Endothelial cell of umbilical vein (primary cell): ENCODE measurements at regions of chr19 and their contacts with region 1.

Region 1: DNA sequence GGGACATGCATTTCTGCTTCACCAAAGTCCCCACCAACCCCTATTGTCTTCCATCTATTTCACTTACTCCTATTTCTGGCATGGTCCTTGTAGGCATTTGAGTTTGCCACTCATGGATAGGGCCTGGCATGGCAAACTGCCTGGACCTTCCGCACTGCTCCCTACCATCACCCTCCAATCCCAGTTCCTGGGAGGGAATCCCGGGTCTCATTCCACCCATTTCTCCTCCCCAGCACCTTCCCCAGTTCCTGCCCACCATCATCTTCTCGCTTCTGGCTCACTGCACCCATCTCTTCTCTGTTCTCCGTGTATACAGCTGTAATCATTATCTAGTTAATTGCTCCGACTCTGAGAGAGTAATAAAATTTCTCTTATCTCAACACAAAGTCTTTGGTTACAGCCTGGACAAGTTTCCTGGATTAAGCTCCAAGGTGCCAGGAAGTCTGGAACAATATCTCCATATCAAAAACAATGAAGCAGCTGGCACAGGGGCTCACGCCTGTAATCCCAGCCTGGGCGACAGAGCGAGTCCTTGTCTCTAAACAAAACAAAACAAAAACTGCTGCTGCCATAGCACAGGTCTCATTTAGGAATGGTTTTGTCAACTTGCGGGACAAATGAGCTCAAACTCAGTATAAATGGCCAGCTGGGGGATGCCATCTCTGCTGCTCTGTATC is 17.0 kb upstream of the COX7A1 start:
- DNase-seq: peak; percentile 93
- H3K4me3 ChIP-seq: no peak overlapping the region
- H3K27ac ChIP-seq: peak overlapping the region; percentile 86
- H3K4me1 ChIP-seq: peaks cover 10% of the 10 kb centered on the region
- H3K27me3 ChIP-seq: no peaks in the 10 kb centered on the region
- CTCF ChIP-seq: no peak
- POLR2A ChIP-seq: no peak

Region 2: DNA sequence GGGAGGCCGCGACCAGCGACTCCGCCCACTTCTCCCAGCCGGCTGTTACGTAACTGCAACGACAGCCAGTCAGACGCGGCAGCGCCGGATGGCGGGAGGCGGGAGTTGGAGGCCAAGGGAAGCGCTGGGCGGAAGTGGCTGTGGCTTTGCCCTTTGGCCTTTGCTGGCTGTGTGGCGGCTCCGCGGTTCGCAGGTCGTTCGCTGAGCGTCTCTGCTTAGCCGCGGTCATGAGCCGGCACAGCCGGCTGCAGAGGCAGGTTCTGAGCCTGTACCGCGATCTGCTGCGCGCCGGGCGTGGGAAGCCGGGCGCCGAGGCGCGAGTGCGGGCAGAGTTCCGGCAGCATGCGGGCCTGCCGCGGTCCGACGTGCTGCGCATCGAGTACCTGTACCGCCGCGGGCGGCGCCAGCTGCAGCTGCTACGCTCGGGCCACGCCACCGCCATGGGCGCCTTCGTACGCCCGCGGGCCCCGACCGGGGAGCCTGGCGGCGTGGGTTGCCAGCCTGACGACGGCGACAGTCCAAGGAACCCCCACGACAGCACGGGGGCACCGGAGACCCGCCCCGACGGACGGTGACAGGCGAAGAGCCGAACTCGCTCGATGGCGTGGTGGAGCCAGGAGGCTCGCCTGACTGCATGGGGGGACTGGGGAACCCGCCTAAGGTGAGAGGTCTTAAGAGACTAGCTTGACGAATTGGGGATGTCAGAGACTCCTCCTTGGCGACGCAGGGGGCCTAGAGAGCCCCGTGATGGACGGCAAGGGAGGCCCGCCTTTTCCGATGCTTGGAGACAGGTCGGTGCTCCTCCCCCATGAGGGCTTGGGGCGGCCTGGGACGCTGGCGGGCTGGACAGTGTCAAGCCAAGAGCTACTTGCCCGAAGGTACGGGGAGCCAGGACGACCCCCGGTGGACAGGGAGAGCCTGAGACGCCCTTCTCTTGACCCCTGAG is 173.9 kb before region 1 on chr19 and contains the start of gene SDHAF1:
- CTCF ChIA-PET with region 1: no interaction called
- POLR2A ChIA-PET with region 1: no interaction called
- dilution Hi-C with region 1: no loop called
- intact Hi-C with region 1: loop called (anchors 2 kb)
- DNase-seq: peak; percentile 92
- H3K4me3 ChIP-seq: peak within 1 kb of the TSS; percentile 62 to 75 (median 64)
- H3K27ac ChIP-seq: peak within 1 kb of the TSS; percentile 47
- H3K4me1 ChIP-seq: peaks cover 10% of the 10 kb centered on the region
- H3K27me3 ChIP-seq: no peaks in the 10 kb centered on the region
- CTCF ChIP-seq: no peak
- POLR2A ChIP-seq: peak; percentile 90
- total RNA-seq, gene SDHAF1: 8.4 and 10.3 TPM in 2 replicates

Region 3: DNA sequence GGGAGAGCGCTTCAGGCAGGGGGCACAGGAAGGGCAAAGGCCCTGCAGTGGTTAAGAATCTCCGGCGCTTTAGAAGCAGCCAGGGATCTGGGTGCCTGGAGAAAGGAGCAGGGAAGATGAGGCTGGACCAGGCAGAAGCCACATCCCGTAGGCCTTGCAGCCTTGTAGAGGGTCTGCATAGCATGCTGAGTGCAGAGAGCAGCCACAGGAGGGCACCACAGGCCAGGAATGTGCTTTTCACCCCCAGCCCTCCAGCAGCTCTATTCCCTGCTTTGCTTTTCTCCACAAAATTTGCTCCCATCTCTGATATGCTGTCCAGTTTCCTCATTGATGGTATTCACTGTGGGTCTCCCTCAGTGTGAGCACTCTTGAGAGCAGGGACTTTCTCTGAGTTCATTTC is 108.8 kb before region 1 on chr19:
- CTCF ChIA-PET with region 1: interaction called, 61 read pairs
- POLR2A ChIA-PET with region 1: no interaction called
- dilution Hi-C with region 1: no loop called
- intact Hi-C with region 1: loop called (anchors 1 kb)
- DNase-seq: peak; percentile 69
- H3K4me3 ChIP-seq: no peak overlapping the region
- H3K27ac ChIP-seq: no peak overlapping the region
- H3K4me1 ChIP-seq: peaks cover 8% of the 10 kb centered on the region
- H3K27me3 ChIP-seq: no peaks in the 10 kb centered on the region
- CTCF ChIP-seq: peak; percentile 72 to 89
- POLR2A ChIP-seq: no peak

Region 4: DNA sequence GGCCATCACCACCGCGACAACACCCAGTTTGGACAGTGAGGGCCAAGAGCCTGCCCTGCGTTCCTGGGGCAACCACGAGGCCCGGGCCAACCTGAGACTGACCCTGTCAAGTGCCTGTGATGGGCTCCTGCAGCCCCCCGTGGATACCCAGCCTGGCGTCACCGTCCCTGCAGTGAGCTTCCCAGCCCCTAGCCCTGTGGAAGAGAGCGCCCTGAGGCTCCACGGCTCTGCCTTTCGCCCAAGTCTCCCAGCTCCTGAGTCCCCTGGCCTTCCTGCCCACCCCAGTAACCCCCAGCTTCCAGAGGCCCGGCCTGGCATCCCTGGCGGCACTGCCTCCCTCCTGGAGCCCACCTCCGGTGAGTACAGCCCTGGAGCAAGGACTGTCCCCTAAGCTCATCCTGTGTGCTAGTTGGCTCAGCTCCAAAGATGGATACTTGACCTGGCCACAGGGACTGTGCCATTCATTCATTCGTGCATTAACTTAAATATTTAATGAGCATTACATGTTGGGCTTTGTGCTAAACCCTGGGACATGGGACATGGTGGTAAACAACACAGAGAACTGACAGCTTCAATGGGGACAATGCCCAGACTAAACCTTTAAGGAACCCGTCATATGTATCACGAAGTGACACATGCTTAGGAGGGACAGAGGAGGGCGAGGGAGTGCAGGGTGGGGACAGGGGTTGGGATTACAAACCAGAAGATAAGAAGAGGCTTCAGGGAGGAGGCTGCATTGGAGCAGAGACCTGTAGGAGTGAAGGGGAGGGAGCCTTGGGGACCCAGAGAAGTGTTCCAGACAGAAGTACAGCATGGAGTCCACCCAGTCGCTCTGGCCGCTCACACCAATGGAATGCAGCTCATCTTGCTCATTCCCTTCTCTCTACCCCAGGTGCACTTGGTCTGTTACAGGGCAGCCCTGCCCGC is 65.3 kb before region 1 on chr19:
- CTCF ChIA-PET with region 1: no interaction called
- POLR2A ChIA-PET with region 1: no interaction called
- dilution Hi-C with region 1: no loop called
- intact Hi-C with region 1: no loop called
- DNase-seq: no peak
- H3K4me3 ChIP-seq: no peak overlapping the region
- H3K27ac ChIP-seq: no peak overlapping the region
- H3K4me1 ChIP-seq: no peaks in the 10 kb centered on the region
- H3K27me3 ChIP-seq: no peaks in the 10 kb centered on the region
- CTCF ChIP-seq: no peak
- POLR2A ChIP-seq: no peak

Region 5: DNA sequence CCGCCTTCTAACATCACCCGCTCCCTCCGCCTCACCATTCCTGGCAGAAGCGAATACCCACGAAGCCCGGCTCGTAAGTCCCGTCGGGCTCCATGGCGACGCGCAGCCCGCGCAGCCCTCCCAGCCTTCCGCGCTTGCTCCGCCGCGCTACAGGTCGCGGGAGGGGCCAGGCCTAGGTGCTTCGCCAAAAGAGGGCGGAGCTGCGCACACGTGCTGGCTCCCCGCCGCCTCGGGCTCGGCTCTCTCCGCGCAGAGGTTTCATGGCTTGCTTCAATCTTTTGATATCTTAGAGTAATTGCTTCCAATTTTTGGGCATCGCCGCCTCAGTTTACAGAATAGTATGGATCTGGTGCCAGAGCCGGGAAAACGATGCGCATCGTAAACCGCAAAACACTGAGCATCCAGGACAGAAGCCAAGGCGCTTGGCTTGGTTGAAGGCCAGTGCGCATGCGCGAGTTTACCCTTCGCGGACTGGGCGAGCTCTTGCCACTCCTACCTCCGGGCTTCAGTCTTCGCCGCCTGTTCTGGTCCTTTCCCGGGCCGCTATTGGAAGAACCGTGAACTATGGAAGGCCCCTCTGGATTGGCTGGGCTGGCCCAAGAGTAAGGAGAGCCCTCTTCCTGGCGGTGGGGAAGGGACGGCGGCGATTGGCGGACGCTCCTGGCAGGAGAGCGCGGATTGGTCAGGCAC is 54.3 kb before region 1 on chr19 and contains the start of gene POLR2I:
- CTCF ChIA-PET with region 1: interaction called, 5 read pairs
- POLR2A ChIA-PET with region 1: interaction called, 5 read pairs
- dilution Hi-C with region 1: no loop called
- intact Hi-C with region 1: loop called (anchors 1 kb)
- DNase-seq: peak; percentile 100
- H3K4me3 ChIP-seq: peak within 1 kb of the TSS; percentile 68 to 81 (median 79)
- H3K27ac ChIP-seq: peak within 1 kb of the TSS; percentile 68
- H3K4me1 ChIP-seq: peaks cover 15% of the 10 kb centered on the region
- H3K27me3 ChIP-seq: no peaks in the 10 kb centered on the region
- CTCF ChIP-seq: no peak
- POLR2A ChIP-seq: peak; percentile 59
- total RNA-seq, gene POLR2I: 63.3 and 64.8 TPM in 2 replicates

Region 6: DNA sequence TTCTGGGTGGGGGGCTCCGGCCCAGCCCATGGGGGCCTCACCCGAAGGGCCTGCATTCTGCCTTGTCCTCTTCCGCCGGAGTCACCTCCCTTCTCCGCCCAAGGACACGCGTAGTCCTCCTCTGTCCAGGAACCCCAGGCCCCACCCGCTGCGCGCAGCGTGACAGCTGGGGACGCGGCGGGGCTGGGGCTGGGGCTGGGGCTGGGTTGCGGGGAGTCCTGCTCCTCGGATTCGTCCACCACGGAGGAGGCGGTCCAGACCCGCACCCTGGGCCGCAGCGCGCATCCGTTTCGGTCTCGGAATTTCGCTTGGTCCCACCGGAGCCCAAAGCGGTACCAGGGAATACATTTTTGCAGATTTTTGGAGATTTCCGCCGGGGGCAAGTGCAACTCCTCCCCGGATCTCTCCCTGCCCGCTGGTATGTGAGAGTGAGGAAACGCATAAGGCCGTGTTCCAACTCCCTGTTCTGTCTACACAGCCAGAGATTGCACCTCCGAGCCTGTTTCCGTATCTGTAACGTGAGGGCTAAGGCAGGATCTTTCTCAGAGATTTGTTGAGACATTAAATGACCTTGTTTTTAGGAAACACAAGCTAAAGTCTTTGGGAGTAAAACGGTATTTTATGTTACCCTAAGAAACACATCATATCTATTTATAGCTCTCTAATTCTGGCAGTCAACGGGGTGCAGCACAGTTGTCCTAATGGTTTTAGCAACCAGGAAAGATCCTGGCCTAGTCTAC is 16.7 kb before region 1 on chr19 and contains the start of gene COX7A1:
- CTCF ChIA-PET with region 1: interaction called, 11 read pairs
- POLR2A ChIA-PET with region 1: no interaction called
- dilution Hi-C with region 1: no loop called
- intact Hi-C with region 1: no loop called
- DNase-seq: peak; percentile 23
- H3K4me3 ChIP-seq: peak within 1 kb of the TSS; percentile 43 to 70 (median 56)
- H3K27ac ChIP-seq: peak within 1 kb of the TSS; percentile 53
- H3K4me1 ChIP-seq: peaks cover 13% of the 10 kb centered on the region
- H3K27me3 ChIP-seq: no peaks in the 10 kb centered on the region
- CTCF ChIP-seq: no peak
- POLR2A ChIP-seq: no peak
- total RNA-seq, gene COX7A1: 26.8 and 35.2 TPM in 2 replicates